ENCODE measurements at regions of chr3 and their contacts with region 1.

Region 1: DNA sequence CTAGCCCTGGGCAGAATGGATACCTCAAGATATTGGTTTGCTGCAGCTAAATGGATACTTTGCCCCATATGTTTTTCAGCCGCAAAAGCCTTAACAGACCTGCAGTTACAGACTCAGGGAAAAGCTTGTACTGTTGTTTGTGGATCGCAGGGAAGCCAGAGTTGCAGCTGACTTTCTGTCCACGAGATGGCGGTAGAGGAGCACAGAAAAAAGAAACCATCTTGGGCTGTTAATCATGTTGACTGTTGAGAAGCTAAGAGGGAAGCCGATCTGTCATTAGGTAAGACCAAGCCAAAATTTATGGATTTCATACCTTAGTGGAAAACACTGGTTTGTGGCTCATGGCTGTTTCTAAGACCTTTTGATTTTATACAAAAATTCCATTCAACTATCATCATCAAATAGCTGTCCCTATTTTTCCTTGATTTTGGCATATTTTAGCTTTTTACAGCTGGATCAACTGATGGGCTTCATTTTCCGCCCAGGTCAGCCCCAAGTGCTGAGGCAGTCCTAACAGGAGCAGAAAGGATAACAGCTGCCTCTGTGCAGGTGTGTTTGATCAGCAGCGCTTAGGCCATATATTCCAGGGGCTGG is 205.7 kb upstream of the ZPLD1 start:
- DNase-seq: peak; percentile 72

Region 2: GRCh38 chr3:101868534-101869464 is 360.4 kb before region 1 on chr3:
- in situ Hi-C with region 1: loop called (anchors 10 kb)
- DNase-seq: peak; percentile 95

Region 3: DNA sequence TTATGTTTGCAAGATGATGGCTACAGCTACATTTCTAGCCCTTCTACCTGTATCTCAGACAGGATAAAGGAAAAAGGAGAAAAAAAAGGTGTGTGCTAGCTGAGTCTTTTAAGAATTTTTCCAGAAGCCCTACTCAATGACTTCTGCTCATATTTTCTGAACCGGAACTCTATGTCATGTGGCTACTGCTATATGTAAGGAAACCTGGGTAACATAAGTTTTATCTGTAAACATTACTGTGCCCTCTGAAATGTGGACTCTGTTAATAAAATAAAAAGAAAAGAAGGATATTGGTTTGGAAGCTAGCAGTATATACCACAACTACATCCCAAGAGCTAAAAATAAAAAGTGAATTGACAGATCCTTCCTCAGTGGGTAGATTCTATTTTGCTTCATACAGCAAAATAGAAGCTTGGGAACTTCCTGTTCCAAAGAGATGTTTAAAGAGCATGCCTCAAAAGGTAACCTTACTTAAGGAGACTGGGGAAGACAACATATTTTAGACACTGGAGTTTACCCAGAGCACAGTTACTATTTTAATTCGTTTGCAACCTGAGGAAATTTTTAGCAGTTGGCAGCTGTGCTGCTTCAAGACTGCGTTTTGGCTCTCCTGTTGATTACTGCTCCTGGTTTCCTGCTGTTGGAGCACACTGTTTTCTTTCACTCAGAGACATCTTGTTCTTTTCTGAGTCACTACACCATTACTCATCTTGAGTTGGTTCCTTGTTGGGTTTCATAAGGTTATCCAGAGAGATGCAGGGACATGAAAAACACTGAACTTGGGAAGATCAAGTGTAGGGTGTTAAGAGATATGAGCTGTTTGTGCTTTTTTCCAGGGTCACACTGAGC is 99.2 kb before region 1 on chr3:
- in situ Hi-C with region 1: no loop called
- DNase-seq: peak; percentile 45

Region 4: GRCh38 chr3:102536456-102536855 is 307.3 kb after region 1 on chr3:
- in situ Hi-C with region 1: loop called (anchors 25 kb)
- DNase-seq: peak; percentile 42

Measured in Caki2 (cell line).